ENCODE measurements at regions of chr11 and their contacts with region 1.

Region 1: GRCh38 chr11:125923012-125923579 is 18.8 kb downstream of the DDX25 start:
- DNase-seq: peak in 8 of 9 experiments; percentile 29 to 72 (median 55)
- ATAC-seq: peak; percentile 52
- H3K4me3 ChIP-seq: no peak overlapping the region
- H3K4me3 Mint-ChIP-seq: no peak overlapping the region
- H3K27ac ChIP-seq: no peak overlapping the region
- H3K27ac Mint-ChIP-seq: no peak overlapping the region
- H3K4me1 ChIP-seq: no peaks in the 10 kb centered on the region
- H3K4me1 Mint-ChIP-seq: no peaks in the 10 kb centered on the region
- H3K27me3 ChIP-seq: no peaks in the 10 kb centered on the region
- H3K27me3 Mint-ChIP-seq: peaks cover 32% of the 10 kb centered on the region
- CTCF ChIP-seq: peak; percentile 60

Region 2: GRCh38 chr11:125910226-125910849 is 12.8 kb before region 1 on chr11:
- CTCF ChIA-PET with region 1: interaction called, 12 read pairs
- POLR2A ChIA-PET with region 1: no interaction called
- intact Hi-C with region 1: no loop called
- DNase-seq: no peak
- ATAC-seq: no peak
- H3K4me3 ChIP-seq: no peak overlapping the region
- H3K4me3 Mint-ChIP-seq: no peak overlapping the region
- H3K27ac ChIP-seq: no peak overlapping the region
- H3K27ac Mint-ChIP-seq: no peak overlapping the region
- H3K4me1 ChIP-seq: no peaks in the 10 kb centered on the region
- H3K4me1 Mint-ChIP-seq: no peaks in the 10 kb centered on the region
- H3K27me3 ChIP-seq: peaks cover 0 to 10% of the 10 kb centered on the region in 2 experiments
- H3K27me3 Mint-ChIP-seq: peaks cover 29% of the 10 kb centered on the region
- CTCF ChIP-seq: no peak

Region 3: DNA sequence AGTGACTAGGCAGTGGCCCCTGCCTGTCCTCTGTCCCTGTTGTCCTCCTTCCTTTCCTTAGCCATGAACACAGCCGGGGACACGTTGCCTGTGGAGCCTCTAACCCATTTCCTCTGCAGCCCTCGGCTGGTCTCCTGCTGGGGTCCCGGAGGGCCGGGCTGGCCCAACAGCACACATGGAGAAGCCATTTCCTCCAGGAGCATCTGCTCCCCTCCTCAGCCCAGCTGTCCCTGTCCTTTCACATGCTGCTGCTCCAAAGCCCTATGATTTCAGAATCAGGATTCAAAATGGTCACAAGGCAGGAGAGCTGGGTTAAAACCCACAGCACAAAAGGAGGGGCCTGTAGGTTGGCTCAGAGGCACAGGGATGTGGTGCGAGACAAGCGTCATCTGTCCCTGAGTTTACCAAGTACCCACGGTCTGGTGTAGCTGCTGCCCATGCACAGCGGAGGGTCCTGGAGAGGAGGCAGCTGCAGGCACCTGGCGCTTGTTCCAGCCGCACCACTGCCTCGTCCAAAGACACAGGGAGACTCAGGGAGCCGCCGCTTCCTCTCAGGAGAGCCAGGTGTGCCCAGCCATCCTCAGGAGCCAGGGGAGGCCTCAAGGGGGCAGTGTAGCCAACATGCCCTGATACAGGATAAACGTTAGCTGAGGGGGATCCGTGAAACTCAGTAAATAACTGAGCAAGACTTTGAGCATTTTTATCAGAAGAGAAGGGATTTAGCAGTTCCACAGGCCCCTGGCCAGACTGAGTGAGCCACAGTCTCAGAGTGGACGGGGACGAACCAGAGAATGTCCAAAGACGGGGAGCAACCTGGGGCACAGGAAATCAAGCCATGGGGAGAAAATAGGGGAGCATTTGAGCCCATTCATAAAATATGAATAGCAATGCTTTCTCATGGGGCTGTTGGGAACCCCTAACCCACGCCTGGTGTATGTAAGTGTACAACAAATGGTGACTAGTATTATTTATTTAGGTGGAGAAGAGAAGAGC is 18.8 kb after region 1 on chr11:
- CTCF ChIA-PET with region 1: interaction called, 7 read pairs
- POLR2A ChIA-PET with region 1: no interaction called
- intact Hi-C with region 1: loop called in 1 of 2 experiments (anchors 1 kb)
- DNase-seq: peak in 7 of 9 experiments; percentile 19 to 53 (median 43)
- ATAC-seq: no peak
- H3K4me3 ChIP-seq: no peak overlapping the region
- H3K4me3 Mint-ChIP-seq: no peak overlapping the region
- H3K27ac ChIP-seq: no peak overlapping the region
- H3K27ac Mint-ChIP-seq: no peak overlapping the region
- H3K4me1 ChIP-seq: peaks cover 5% of the 10 kb centered on the region
- H3K4me1 Mint-ChIP-seq: peaks cover 12% of the 10 kb centered on the region
- H3K27me3 ChIP-seq: no peaks in the 10 kb centered on the region
- H3K27me3 Mint-ChIP-seq: no peaks in the 10 kb centered on the region
- CTCF ChIP-seq: peak; percentile 60

Region 4: DNA sequence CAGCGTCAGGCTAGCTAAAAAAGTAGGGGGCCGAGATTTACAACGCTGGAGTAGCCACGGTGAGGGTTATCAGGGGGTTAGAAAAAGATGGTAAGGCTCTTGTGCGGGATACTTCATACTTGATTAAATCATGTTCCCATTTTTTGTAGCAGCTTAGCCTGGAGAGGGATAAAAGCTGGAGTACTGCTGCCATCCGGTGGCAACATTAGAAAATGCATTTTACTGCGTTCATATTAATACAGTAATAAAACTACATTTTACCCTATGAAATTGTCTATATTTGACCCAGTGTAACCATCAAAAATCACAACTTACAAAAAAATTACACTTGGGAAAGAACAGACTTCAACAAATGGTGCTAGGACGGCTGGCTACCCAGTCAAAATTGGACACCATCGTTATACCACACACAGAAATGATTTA is 271.0 kb after region 1 on chr11:
- CTCF ChIA-PET with region 1: interaction called, 24 read pairs
- POLR2A ChIA-PET with region 1: interaction called, 3 read pairs
- intact Hi-C with region 1: loop called in 1 of 2 experiments (anchors 1 kb)
- DNase-seq: peak in 5 of 9 experiments; percentile 12 to 52 (median 37)
- ATAC-seq: no peak
- H3K4me3 ChIP-seq: no peak overlapping the region
- H3K4me3 Mint-ChIP-seq: no peak overlapping the region
- H3K27ac ChIP-seq: no peak overlapping the region
- H3K27ac Mint-ChIP-seq: no peak overlapping the region
- H3K4me1 ChIP-seq: no peaks in the 10 kb centered on the region
- H3K4me1 Mint-ChIP-seq: no peaks in the 10 kb centered on the region
- H3K27me3 ChIP-seq: no peaks in the 10 kb centered on the region
- H3K27me3 Mint-ChIP-seq: no peaks in the 10 kb centered on the region
- CTCF ChIP-seq: peak; percentile 70

Region 5: GRCh38 chr11:126989942-126990715 is 1067.0 kb after region 1 on chr11:
- CTCF ChIA-PET with region 1: no interaction called
- POLR2A ChIA-PET with region 1: no interaction called
- intact Hi-C with region 1: loop called in 1 of 2 experiments (anchors 2 kb)
- DNase-seq: peak; percentile 10 to 59 (median 38)
- ATAC-seq: no peak
- H3K4me3 ChIP-seq: no peak overlapping the region
- H3K4me3 Mint-ChIP-seq: no peak overlapping the region
- H3K27ac ChIP-seq: no peak overlapping the region
- H3K27ac Mint-ChIP-seq: no peak overlapping the region
- H3K4me1 ChIP-seq: no peaks in the 10 kb centered on the region
- H3K4me1 Mint-ChIP-seq: no peaks in the 10 kb centered on the region
- H3K27me3 ChIP-seq: no peaks in the 10 kb centered on the region
- H3K27me3 Mint-ChIP-seq: peaks cover 23% of the 10 kb centered on the region
- CTCF ChIP-seq: peak; percentile 64

Measured in CD8-positive, alpha-beta T cell (primary cell).